ENCODE measurements at regions of chr14 and their contacts with region 1.

Region 1: GRCh38 chr14:33839193-33840076 is 111.4 kb downstream of the EGLN3 start:
- DNase-seq: peak; percentile 58
- ATAC-seq: peak; percentile 85
- H3K4me3 ChIP-seq: no peak overlapping the region
- H3K27ac ChIP-seq: no peak overlapping the region
- H3K4me1 ChIP-seq: no peaks in the 10 kb centered on the region
- H3K27me3 ChIP-seq: peaks cover 5 to 26% of the 10 kb centered on the region in 2 experiments; a peak in 3 of 5 replicates
- CTCF ChIP-seq: peak; percentile 96
- EP300 ChIP-seq: no peak
- POLR2A ChIP-seq: no peak
- RAD21 ChIP-seq: peak; percentile 87

Region 2: GRCh38 chr14:33457021-33457420 is 382.4 kb before region 1 on chr14:
- CTCF ChIA-PET with region 1: no interaction called
- POLR2A ChIA-PET with region 1: no interaction called
- in situ Hi-C with region 1: no loop called
- intact Hi-C with region 1: no loop called
- DNase-seq: no peak
- ATAC-seq: no peak
- H3K4me3 ChIP-seq: no peak overlapping the region
- H3K27ac ChIP-seq: no peak overlapping the region
- H3K4me1 ChIP-seq: no peaks in the 10 kb centered on the region
- H3K27me3 ChIP-seq: peaks cover 0 to 2% of the 10 kb centered on the region in 2 experiments; a peak in 1 of 5 replicates
- CTCF ChIP-seq: no peak
- EP300 ChIP-seq: no peak
- POLR2A ChIP-seq: no peak
- RAD21 ChIP-seq: no peak

Region 3: DNA sequence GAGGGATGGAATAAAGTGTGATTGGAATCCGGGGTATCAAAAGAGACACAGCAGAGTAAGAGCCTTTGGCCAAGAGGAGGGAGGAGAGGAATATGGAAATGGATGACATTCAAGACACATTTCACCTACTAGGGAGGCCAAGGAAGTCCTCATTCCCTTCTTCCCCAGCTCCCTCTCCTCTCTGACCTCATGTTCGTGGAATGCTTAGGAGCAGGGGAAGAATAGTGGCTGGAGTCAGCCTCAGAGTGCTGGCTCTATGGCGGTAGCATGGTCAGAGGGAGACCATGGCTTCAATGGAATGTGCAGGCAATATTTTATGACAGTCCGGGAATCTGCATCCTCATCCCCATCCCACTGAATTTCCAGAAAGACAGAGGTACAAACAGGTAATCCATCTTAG is 85.2 kb before region 1 on chr14:
- CTCF ChIA-PET with region 1: no interaction called
- POLR2A ChIA-PET with region 1: no interaction called
- in situ Hi-C with region 1: no loop called
- intact Hi-C with region 1: no loop called
- DNase-seq: no peak
- ATAC-seq: 0 out of 3 replicates have a peak, but pooled peaks have one; percentile 34
- H3K4me3 ChIP-seq: no peak overlapping the region
- H3K27ac ChIP-seq: no peak overlapping the region
- H3K4me1 ChIP-seq: no peaks in the 10 kb centered on the region
- H3K27me3 ChIP-seq: no peaks in the 10 kb centered on the region
- CTCF ChIP-seq: no peak
- EP300 ChIP-seq: no peak
- POLR2A ChIP-seq: no peak
- RAD21 ChIP-seq: no peak

Region 4: DNA sequence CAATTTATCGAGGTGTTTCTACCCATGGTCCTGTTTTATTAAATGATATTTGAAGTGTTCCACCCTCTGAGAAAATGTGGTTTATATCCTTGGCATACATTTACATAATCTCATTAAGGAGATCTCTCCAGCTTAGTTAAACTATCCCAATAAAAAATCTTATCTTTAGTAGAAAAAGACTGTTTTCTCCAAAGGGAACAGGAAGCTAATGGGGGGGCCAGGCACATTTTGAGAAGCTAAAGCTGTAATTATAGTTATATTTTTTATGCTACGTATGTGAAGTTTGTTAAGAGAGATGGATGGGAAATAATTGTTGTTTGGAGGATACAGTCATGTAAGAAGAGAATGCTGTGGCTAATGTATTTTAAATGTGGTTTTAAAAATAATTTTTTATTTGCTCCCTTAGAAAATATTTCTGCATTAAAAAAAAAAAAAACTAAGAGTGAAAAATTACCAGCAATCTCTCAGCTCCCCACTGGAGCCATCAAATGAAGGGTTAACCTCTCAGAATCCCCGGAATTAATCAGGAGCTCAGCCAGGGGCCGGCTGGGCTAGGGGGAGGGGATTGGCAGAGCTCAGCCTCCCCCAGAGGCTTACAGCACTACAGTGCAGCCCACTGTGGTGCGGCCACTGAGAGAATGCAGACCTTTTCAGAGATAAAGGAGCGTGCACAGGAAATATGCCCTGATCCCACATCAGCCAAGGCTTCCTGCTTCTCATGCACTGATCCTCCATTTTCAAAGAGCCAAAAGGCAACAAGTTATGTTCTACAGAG is 74.4 kb before region 1 on chr14:
- CTCF ChIA-PET with region 1: no interaction called
- POLR2A ChIA-PET with region 1: no interaction called
- in situ Hi-C with region 1: no loop called
- intact Hi-C with region 1: no loop called
- DNase-seq: no peak
- ATAC-seq: peak; percentile 62
- H3K4me3 ChIP-seq: no peak overlapping the region
- H3K27ac ChIP-seq: no peak overlapping the region
- H3K4me1 ChIP-seq: no peaks in the 10 kb centered on the region
- H3K27me3 ChIP-seq: no peaks in the 10 kb centered on the region; a peak in 1 of 5 replicates
- CTCF ChIP-seq: no peak
- EP300 ChIP-seq: no peak
- POLR2A ChIP-seq: no peak
- RAD21 ChIP-seq: no peak

Region 5: DNA sequence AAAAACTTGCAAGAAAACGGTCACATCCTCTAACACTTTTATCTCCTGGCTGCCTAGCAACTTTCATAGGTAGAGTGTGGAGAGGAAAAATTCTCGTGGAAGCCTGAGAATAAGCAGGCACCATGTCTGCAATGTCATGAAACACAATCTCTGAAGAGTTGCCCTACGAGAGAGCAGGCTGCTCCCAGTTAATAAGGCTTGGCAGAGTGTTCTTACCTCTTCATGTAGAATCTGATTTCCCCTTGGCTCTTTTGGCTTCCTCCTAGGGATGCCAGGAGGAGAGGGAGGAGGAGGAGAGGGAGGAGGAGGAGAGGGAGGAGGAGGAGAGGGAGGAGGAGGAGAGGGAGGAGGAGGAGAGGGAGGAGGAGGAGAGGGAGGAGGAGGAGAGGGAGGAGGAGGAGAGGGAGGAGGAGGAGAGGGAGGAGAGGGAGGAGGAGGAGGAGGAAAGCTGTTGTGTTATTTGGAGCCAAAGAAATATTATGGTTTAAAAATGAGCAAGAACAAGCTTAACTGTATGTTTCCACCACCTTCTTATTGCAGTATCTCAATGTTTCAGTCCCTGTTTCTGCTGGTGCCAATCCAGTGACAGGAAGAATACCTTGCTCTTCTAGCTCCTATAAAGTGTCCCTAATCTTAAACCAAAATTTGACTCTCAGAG is 58.6 kb after region 1 on chr14:
- CTCF ChIA-PET with region 1: no interaction called
- POLR2A ChIA-PET with region 1: no interaction called
- in situ Hi-C with region 1: no loop called
- intact Hi-C with region 1: no loop called
- DNase-seq: no peak
- ATAC-seq: no peak
- H3K4me3 ChIP-seq: no peak overlapping the region
- H3K27ac ChIP-seq: no peak overlapping the region
- H3K4me1 ChIP-seq: peaks cover 27% of the 10 kb centered on the region
- H3K27me3 ChIP-seq: no peaks in the 10 kb centered on the region
- CTCF ChIP-seq: no peak
- EP300 ChIP-seq: no peak
- POLR2A ChIP-seq: no peak
- RAD21 ChIP-seq: no peak

Region 6: GRCh38 chr14:34300882-34301734 is 461.7 kb after region 1 on chr14:
- CTCF ChIA-PET with region 1: interaction called, 8 read pairs
- POLR2A ChIA-PET with region 1: no interaction called
- in situ Hi-C with region 1: loop called (anchors 5 kb)
- intact Hi-C with region 1: loop called (anchors 1 kb)
- DNase-seq: peak; percentile 54
- ATAC-seq: peak; percentile 63
- H3K4me3 ChIP-seq: no peak overlapping the region
- H3K27ac ChIP-seq: no peak overlapping the region
- H3K4me1 ChIP-seq: peaks cover 9% of the 10 kb centered on the region
- H3K27me3 ChIP-seq: 0 out of 5 replicates have a peak, but pooled peaks cover 0 to 6% of the 10 kb centered on the region in 2 experiments
- CTCF ChIP-seq: peak; percentile 78
- EP300 ChIP-seq: no peak
- POLR2A ChIP-seq: no peak
- RAD21 ChIP-seq: peak; percentile 37; the same call in 1 of the 2 replicates

Measured in HepG2 (cell line).